Spleen (tissue), 13 donors: ENCODE measurements at regions of chr10 and their contacts with region 1.

Region 1: GRCh38 chr10:129030996-129031843 is 435.8 kb upstream of the MGMT start:
- DNase-seq: no peak
- H3K4me3 ChIP-seq: no peak overlapping the region
- H3K27ac ChIP-seq: no peak overlapping the region
- H3K4me1 ChIP-seq: peaks cover 0 to 19% (median 0%) of the 10 kb centered on the region in 6 donors
- H3K27me3 ChIP-seq: peaks cover 0 to 84% (median 17%) of the 10 kb centered on the region in 7 donors
- CTCF ChIP-seq: peak; percentile 58 to 87 (median 78)
- POLR2A ChIP-seq: no peak

Region 2: DNA sequence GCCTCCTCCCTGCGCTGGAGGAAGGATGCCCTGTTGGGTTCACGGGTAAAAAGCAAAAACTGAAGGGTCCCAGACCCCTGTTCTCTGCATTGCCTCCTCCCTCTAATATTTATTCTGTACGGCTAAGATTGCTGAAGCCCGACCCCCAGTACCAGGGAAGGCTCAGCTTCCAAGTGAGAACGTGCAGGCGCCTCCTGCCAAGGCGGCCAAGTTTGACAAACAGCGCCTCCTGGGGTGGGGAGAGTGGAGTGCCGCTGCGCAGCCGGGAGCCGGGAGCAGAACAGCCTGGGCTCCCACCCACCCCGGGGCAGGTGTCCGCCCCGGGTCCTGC is 937.6 kb after region 1 on chr10:
- intact Hi-C with region 1: loop called (anchors 5 kb)
- DNase-seq: no peak
- H3K4me3 ChIP-seq: no peak overlapping the region
- H3K27ac ChIP-seq: no peak overlapping the region
- H3K4me1 ChIP-seq: peaks cover 12 to 87% (median 50%) of the 10 kb centered on the region in 6 donors
- H3K27me3 ChIP-seq: peaks cover 37 to 100% (median 98%) of the 10 kb centered on the region in 7 donors
- CTCF ChIP-seq: peak in 4 of 11 experiments; percentile 10 to 57 (median 34)
- POLR2A ChIP-seq: no peak